CD4-positive, alpha-beta memory T cell (primary cell): ENCODE measurements at regions of chr11 and their contacts with region 1.

Region 1: GRCh38 chr11:73177778-73178577 is 35.9 kb upstream of the FCHSD2 start:
- DNase-seq: peak; percentile 71 to 77 (median 73)
- H3K4me3 ChIP-seq: no peak overlapping the region
- H3K4me3 Mint-ChIP-seq: no peak overlapping the region
- H3K27ac ChIP-seq: no peak overlapping the region
- H3K27ac Mint-ChIP-seq: peak overlapping the region in 2 of 7 donors; percentile 35 to 43
- H3K4me1 ChIP-seq: peaks cover 10% of the 10 kb centered on the region
- H3K4me1 Mint-ChIP-seq: peaks cover 0 to 9% (median 3%) of the 10 kb centered on the region in 4 donors
- H3K27me3 ChIP-seq: no peaks in the 10 kb centered on the region
- H3K27me3 Mint-ChIP-seq: peaks cover 0 to 3% of the 10 kb centered on the region in 2 donors

Region 2: GRCh38 chr11:72585762-72586311 is 592.1 kb before region 1 on chr11:
- CTCF ChIA-PET with region 1: no interaction called
- POLR2A ChIA-PET with region 1: no interaction called
- intact Hi-C with region 1: loop called (anchors 2 kb)
- DNase-seq: peak; percentile 66 to 77 (median 71)
- H3K4me3 ChIP-seq: peak overlapping the region; percentile 47 to 50
- H3K4me3 Mint-ChIP-seq: peak overlapping the region; percentile 79 to 97 (median 92)
- H3K27ac ChIP-seq: no peak overlapping the region
- H3K27ac Mint-ChIP-seq: peak overlapping the region in 6 of 7 donors; percentile 33 to 97 (median 70)
- H3K4me1 ChIP-seq: peaks cover 34% of the 10 kb centered on the region
- H3K4me1 Mint-ChIP-seq: peaks cover 14 to 52% (median 28%) of the 10 kb centered on the region in 4 donors
- H3K27me3 ChIP-seq: peaks cover 11% of the 10 kb centered on the region
- H3K27me3 Mint-ChIP-seq: peaks cover 17 to 37% of the 10 kb centered on the region in 2 donors

Region 3: DNA sequence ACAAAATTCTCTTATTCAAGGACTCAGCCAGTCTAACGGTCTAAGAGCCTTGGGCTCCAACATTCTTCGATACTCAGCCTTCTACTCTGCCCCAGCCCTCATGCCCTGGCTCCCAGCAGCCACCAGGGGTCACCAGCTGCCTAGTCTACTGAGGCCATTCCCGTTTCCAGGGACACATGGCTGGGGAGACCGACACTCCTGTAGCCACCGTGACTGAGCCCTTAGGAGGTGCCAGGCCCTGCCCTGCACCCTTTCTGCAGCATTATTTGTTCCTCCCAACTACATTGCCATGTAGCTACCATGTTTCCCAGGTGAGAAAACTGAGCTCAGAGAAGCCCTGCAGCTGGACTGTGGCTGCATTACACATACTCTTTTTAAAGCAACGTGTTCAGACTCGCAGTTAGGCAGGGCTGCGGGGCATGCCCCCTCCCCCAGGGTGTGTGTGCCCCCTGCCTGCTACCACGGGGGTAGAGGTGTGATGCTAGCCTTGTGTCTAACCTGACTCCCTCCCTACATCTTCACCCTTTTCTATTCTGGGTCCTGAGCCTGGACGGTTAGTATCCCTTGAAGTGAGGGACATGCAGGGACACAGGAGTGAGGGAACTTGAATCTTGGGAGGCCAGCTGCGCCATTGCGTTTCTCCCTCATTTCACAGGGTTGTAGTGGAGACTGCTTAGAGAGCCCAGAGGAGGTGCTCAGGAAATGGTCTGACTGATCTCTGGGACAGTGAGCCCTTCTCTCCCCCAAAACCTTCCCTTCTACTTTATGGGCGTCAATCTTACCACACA is 346.3 kb before region 1 on chr11:
- CTCF ChIA-PET with region 1: interaction called, 112 read pairs
- POLR2A ChIA-PET with region 1: interaction called, 19 read pairs
- intact Hi-C with region 1: loop called (anchors 1 kb)
- DNase-seq: peak; percentile 40 to 55 (median 44)
- H3K4me3 ChIP-seq: no peak overlapping the region
- H3K4me3 Mint-ChIP-seq: no peak overlapping the region
- H3K27ac ChIP-seq: no peak overlapping the region
- H3K27ac Mint-ChIP-seq: peak overlapping the region; percentile 3 to 79 (median 57)
- H3K4me1 ChIP-seq: no peaks in the 10 kb centered on the region
- H3K4me1 Mint-ChIP-seq: peaks cover 0 to 16% (median 6%) of the 10 kb centered on the region in 4 donors
- H3K27me3 ChIP-seq: no peaks in the 10 kb centered on the region
- H3K27me3 Mint-ChIP-seq: no peaks in the 10 kb centered on the region

Region 4: DNA sequence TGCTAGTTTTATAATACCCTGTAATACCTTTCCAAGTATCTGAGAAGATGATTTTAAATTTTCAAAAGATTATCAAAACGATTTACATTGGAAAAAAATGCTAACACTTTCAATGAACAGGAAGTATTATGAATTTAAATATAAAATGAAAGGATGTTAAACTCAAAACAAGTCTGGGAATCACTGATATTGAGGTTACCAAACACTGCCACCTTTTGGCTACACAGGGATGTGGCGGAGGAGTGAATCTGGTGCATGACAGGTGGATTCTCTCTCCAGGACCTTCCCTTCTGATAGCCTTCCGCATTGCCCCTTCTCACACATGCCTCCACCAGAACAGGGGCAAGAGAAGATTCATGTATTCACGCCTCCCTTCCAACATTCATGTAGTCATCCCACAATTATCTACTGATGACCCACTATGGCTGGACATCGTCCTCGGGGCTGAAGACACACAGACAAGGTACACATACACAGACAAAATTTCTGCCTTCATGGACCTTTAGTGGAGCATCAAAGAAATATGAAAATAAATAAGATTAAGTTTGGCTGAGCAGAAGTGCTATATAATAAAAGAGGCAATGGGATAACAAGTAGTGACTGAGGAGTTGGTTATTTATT is 329.0 kb before region 1 on chr11:
- CTCF ChIA-PET with region 1: interaction called, 11 read pairs
- POLR2A ChIA-PET with region 1: no interaction called
- intact Hi-C with region 1: no loop called
- DNase-seq: peak; percentile 42 to 57 (median 47)
- H3K4me3 ChIP-seq: no peak overlapping the region
- H3K4me3 Mint-ChIP-seq: no peak overlapping the region
- H3K27ac ChIP-seq: no peak overlapping the region
- H3K27ac Mint-ChIP-seq: peak overlapping the region in 2 of 7 donors; percentile 42 to 56
- H3K4me1 ChIP-seq: no peaks in the 10 kb centered on the region
- H3K4me1 Mint-ChIP-seq: peaks cover 7 to 14% (median 11%) of the 10 kb centered on the region in 4 donors
- H3K27me3 ChIP-seq: no peaks in the 10 kb centered on the region
- H3K27me3 Mint-ChIP-seq: no peaks in the 10 kb centered on the region

Region 5: GRCh38 chr11:73141848-73142286 is 36.1 kb before region 1 on chr11:
- CTCF ChIA-PET with region 1: interaction called, 31 read pairs
- POLR2A ChIA-PET with region 1: interaction called, 27 read pairs
- intact Hi-C with region 1: loop called (anchors 2 kb)
- DNase-seq: peak in 1 of 5 donors; percentile 78
- H3K4me3 ChIP-seq: peak overlapping the region; percentile 80 to 94
- H3K4me3 Mint-ChIP-seq: peak overlapping the region; percentile 92 to 98 (median 96)
- H3K27ac ChIP-seq: peak overlapping the region; percentile 97
- H3K27ac Mint-ChIP-seq: peak overlapping the region; percentile 84 to 98 (median 95)
- H3K4me1 ChIP-seq: peaks cover 49% of the 10 kb centered on the region
- H3K4me1 Mint-ChIP-seq: peaks cover 30 to 55% (median 39%) of the 10 kb centered on the region in 4 donors
- H3K27me3 ChIP-seq: no peaks in the 10 kb centered on the region
- H3K27me3 Mint-ChIP-seq: no peaks in the 10 kb centered on the region

Region 6: GRCh38 chr11:73157053-73158010 is 20.6 kb before region 1 on chr11:
- CTCF ChIA-PET with region 1: interaction called, 15 read pairs
- POLR2A ChIA-PET with region 1: no interaction called
- intact Hi-C with region 1: no loop called
- DNase-seq: no peak
- H3K4me3 ChIP-seq: no peak overlapping the region
- H3K4me3 Mint-ChIP-seq: no peak overlapping the region
- H3K27ac ChIP-seq: no peak overlapping the region
- H3K27ac Mint-ChIP-seq: peak overlapping the region in 4 of 7 donors; percentile 12 to 52 (median 43)
- H3K4me1 ChIP-seq: peaks cover 42% of the 10 kb centered on the region
- H3K4me1 Mint-ChIP-seq: peaks cover 30 to 47% (median 39%) of the 10 kb centered on the region in 4 donors
- H3K27me3 ChIP-seq: no peaks in the 10 kb centered on the region
- H3K27me3 Mint-ChIP-seq: no peaks in the 10 kb centered on the region